ENCODE measurements at regions of chr19 and their contacts with region 1.

Region 1: GRCh38 chr19:14347999-14348889 is 33.0 kb upstream of the ADGRE5 start:
- DNase-seq: peak; percentile 75
- ATAC-seq: peak; percentile 78
- H3K4me3 Mint-ChIP-seq: peak overlapping the region; percentile 14
- H3K27ac Mint-ChIP-seq: no peak overlapping the region
- H3K4me1 Mint-ChIP-seq: peaks cover 12% of the 10 kb centered on the region
- H3K27me3 Mint-ChIP-seq: no peaks in the 10 kb centered on the region
- CTCF ChIP-seq: peak; percentile 99

Region 2: GRCh38 chr19:14147797-14148605 is 200.2 kb before region 1 on chr19:
- CTCF ChIA-PET with region 1: interaction called, 15 read pairs
- POLR2A ChIA-PET with region 1: no interaction called
- intact Hi-C with region 1: no loop called
- DNase-seq: peak; percentile 73
- ATAC-seq: peak; percentile 78
- H3K4me3 Mint-ChIP-seq: peak overlapping the region; percentile 60
- H3K27ac Mint-ChIP-seq: peak overlapping the region; percentile 88
- H3K4me1 Mint-ChIP-seq: peaks cover 38% of the 10 kb centered on the region
- H3K27me3 Mint-ChIP-seq: no peaks in the 10 kb centered on the region
- CTCF ChIP-seq: peak; percentile 68

Region 3: DNA sequence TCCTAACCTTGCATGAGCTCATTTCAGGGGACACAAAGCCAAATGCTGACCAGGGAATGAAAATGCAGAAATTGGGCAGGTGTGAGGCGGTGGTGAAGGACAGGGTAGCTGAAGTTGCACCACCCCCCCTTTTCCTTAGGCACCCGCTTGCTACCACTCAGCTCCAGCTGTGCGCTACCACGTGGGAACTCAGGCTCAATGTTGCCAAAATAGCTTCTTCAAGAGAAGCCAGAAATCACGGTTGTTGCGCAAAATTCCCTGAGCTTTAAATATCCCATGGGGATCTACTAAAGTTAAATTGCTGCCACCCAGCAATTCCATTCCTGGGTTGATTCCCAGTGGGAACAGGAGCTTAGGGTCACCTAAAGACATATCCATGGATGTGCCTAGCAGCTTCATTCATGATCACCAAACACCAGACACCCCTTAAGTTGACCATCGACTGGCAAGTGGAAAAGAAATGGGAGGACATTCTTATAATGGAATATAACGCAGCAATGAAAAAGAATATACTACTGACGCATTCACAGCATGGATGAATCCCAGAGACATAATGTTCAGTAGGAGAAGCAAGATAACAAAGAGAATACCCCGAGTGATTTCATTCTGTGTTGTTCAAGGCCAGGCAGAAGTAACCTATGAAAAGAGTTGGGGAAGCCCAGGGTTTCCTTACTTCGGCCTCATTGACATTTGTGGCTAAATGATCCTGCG is 129.5 kb before region 1 on chr19:
- CTCF ChIA-PET with region 1: interaction called, 22 read pairs
- POLR2A ChIA-PET with region 1: no interaction called
- intact Hi-C with region 1: no loop called
- DNase-seq: no peak
- ATAC-seq: no peak
- H3K4me3 Mint-ChIP-seq: no peak overlapping the region
- H3K27ac Mint-ChIP-seq: no peak overlapping the region
- H3K4me1 Mint-ChIP-seq: peaks cover 18% of the 10 kb centered on the region
- H3K27me3 Mint-ChIP-seq: no peaks in the 10 kb centered on the region
- CTCF ChIP-seq: no peak

Region 4: DNA sequence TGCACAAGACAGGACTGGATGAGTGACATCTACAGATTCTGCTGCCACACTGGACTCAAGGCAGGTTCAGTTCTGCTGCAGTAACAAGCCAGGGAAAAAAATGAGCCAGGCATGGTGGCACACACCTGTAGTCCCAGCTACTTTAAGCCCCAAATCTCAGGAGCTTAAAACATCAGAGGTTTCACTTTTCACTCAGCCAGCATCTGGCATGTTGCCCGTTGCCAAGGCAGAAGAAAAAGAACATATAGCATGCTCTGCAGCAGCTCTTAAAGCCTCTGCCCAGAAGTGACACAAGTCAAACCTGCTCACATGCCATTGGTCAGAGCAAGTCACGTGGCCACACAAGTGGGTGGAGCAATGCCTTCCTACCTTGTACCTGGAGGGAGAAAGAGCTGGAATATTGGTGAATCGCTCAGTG is 18.3 kb after region 1 on chr19:
- CTCF ChIA-PET with region 1: interaction called, 20 read pairs
- POLR2A ChIA-PET with region 1: interaction called, 5 read pairs
- intact Hi-C with region 1: no loop called
- DNase-seq: peak; percentile 95
- ATAC-seq: peak; percentile 37
- H3K4me3 Mint-ChIP-seq: no peak overlapping the region
- H3K27ac Mint-ChIP-seq: peak overlapping the region; percentile 100
- H3K4me1 Mint-ChIP-seq: peaks cover 64% of the 10 kb centered on the region
- H3K27me3 Mint-ChIP-seq: no peaks in the 10 kb centered on the region
- CTCF ChIP-seq: no peak

Region 5: DNA sequence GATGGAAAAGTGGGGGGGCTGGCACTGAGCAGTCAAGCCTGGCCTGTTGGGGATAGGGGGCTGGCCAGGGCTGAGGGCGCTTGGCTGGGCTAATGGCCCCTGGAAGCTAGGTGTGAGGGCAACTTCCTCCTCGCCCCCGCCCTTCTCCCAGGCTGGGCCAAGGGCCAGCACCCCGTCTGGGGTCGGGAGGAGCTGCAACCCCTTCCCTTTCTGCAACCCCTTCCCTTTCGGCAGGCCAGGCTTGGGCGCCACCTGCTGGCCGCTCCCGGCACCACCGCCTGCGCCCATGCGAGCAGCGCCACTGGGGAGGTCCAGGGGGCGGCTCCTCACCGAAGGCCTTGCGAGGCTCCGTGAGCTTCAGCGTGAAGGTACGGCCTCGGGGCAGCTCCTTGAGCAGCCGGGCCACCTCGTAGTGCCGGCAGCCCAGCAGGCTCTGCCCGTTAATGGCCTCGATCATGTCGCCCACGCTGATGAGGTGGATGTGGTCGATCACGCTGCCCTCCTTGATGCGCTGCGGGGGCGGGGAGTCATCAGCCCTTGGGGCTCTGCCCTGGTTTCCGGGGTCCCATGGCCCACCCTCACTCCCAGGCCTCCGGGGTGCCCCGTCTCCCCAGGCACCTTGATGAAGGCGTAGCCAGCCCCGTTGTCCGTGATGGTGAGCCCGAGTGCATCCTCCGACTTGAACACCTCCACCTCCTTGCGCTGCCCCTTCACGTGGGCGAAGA is 131.9 kb after region 1 on chr19:
- CTCF ChIA-PET with region 1: interaction called, 11 read pairs
- POLR2A ChIA-PET with region 1: interaction called, 3 read pairs
- intact Hi-C with region 1: no loop called
- DNase-seq: peak; percentile 78
- ATAC-seq: peak; percentile 59
- H3K4me3 Mint-ChIP-seq: no peak overlapping the region
- H3K27ac Mint-ChIP-seq: no peak overlapping the region
- H3K4me1 Mint-ChIP-seq: peaks cover 16% of the 10 kb centered on the region
- H3K27me3 Mint-ChIP-seq: no peaks in the 10 kb centered on the region
- CTCF ChIP-seq: peak; percentile 98

Measured in activated CD8-positive, alpha-beta T cell treated with anti-CD3 and anti-CD28 coated beads for 36 hours (primary cell).